ENCODE measurements at regions of chr10 and their contacts with region 1.

Region 1: DNA sequence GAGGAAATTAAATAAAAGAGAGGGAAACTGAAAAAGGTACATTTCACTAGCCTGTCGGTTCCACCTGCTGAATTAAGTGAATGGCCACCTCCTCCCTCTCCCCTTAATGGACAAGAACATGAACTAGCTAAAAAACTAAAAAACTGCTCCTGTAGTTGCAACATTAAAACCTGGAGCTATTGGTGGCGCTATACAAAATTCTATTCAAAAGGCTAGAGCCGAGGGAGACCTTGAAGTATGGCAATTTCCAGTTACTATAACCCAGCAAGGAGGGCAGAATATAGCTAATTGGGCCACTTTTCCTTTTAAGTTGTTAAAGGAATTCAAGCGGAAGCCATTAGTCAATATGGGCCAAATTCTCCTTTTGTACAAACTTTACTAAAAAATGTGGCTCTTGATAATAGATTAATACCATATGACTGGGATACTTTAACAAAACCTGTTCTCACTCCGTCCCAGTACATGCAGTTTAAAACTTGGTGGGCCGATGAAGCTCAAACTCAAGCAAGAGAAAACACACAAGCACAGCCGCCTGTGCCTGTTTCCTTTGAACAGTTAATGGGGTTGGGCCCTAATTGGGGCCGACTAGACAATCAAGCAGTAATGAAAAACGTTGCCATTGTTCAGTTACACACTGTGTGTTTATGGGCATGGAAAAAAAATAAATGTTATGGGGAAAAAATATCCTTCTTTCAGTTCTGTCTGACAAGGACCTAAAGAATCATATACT is 6.5 kb upstream of the CHST3 start:
- DNase-seq: no peak
- ATAC-seq: no peak
- H3K4me3 ChIP-seq: no peak overlapping the region
- H3K27ac ChIP-seq: no peak overlapping the region
- H3K4me1 ChIP-seq: no peaks in the 10 kb centered on the region
- H3K27me3 ChIP-seq: no peaks in the 10 kb centered on the region
- CTCF ChIP-seq: no peak

Region 2: GRCh38 chr10:71899665-71900412 is 57.9 kb before region 1 on chr10:
- intact Hi-C with region 1: no loop called
- DNase-seq: peak; percentile 78
- ATAC-seq: peak; percentile 83 to 85
- H3K4me3 ChIP-seq: no peak overlapping the region
- H3K27ac ChIP-seq: peak overlapping the region; percentile 74
- H3K4me1 ChIP-seq: peaks cover 10% of the 10 kb centered on the region
- H3K27me3 ChIP-seq: no peaks in the 10 kb centered on the region
- CTCF ChIP-seq: no peak

Region 3: GRCh38 chr10:72048450-72049124 is 90.9 kb after region 1 on chr10:
- intact Hi-C with region 1: loop called (anchors 5 kb)
- DNase-seq: peak; percentile 89
- ATAC-seq: peak; percentile 93 to 96
- H3K4me3 ChIP-seq: no peak overlapping the region
- H3K27ac ChIP-seq: no peak overlapping the region
- H3K4me1 ChIP-seq: peaks cover 11% of the 10 kb centered on the region
- H3K27me3 ChIP-seq: no peaks in the 10 kb centered on the region
- CTCF ChIP-seq: peak; percentile 99

Region 4: DNA sequence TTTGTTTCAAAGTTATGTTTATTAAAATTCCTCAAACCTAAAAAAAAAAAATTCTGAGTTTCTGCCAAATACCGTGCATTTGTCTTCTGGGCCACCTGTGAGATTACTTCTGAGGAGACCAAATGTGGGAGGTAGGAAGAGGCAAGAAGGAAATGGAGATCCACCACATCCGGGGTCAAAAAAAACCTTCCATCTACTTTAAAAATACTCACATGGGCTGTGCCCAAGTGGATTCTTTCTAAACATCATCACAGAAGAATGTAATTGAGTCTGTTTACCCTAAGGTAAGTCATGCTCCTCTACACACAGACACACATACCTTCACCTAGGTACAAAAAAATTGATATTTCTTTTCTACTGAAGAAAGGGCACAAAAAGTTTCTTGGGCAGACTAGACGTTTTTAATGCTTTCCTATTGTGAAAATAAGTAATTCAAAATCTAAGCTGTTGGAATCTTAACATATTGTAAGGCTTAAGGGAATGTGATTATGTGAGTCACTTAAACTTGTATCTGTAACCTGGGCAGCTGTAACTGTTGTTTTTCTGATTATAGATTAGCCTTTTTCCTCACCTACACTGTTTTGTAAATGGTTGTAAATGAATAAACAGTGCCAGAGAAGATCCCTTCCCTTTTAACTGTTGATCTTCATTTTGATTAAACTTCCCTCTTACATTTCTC is 149.8 kb after region 1 on chr10:
- intact Hi-C with region 1: no loop called
- DNase-seq: no peak
- ATAC-seq: peak; percentile 75 to 91
- H3K4me3 ChIP-seq: no peak overlapping the region
- H3K27ac ChIP-seq: peak overlapping the region; percentile 27
- H3K4me1 ChIP-seq: peaks cover 10% of the 10 kb centered on the region
- H3K27me3 ChIP-seq: no peaks in the 10 kb centered on the region
- CTCF ChIP-seq: no peak

Region 5: GRCh38 chr10:72364239-72364777 is 406.6 kb after region 1 on chr10:
- intact Hi-C with region 1: no loop called
- DNase-seq: peak; percentile 88
- ATAC-seq: peak; percentile 96 to 98
- H3K4me3 ChIP-seq: no peak overlapping the region
- H3K27ac ChIP-seq: peak overlapping the region; percentile 46
- H3K4me1 ChIP-seq: peaks cover 13% of the 10 kb centered on the region
- H3K27me3 ChIP-seq: no peaks in the 10 kb centered on the region
- CTCF ChIP-seq: peak; percentile 95

Measured in lower lobe of right lung (tissue), 2 donors.